ENCODE measurements at regions of chr15 and their contacts with region 1.

Region 1: DNA sequence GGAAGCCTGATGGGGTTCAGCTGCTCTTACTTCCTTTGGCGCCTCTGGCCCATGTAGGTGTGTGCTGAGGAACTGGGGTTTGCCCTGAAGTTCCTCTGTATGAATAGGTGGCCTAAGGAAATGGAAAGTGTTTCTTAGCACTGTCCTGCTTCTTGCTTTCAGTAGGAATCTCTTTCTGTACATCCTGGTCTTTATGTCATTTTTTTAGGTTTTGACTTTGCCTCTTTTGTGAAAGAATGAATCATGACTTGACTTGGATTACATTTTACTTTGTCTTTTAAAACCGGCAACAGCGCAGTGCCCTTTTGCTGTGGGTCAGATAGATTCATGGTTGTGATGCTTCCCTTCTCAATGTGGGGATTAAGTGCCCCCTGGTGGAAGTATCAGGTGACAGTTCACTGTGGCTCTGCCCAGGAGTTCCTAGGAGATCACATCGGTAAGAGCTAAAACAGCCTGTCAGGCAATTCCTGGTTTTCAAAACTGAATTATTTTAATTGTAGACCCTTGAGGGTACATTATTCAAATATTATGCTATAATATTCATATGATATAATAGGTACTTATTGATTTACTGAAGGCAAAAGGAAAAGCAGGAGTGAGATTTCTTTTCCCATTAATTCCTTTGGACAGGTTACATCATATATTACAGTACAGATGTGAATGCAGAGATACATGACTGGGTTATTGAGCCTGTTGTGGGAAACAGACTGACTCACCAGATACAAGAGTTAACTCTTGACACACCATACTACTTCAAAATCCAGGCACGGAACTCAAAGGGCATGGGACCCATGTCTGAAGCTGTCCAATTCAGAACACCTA is 95.4 kb downstream of the HCN4 start:
- DNase-seq: no peak
- ATAC-seq: peak; percentile 88

Region 2: GRCh38 chr15:72796515-72797337 is 476.7 kb before region 1 on chr15:
- intact Hi-C with region 1: loop called (anchors 10 kb)
- DNase-seq: peak; percentile 68
- ATAC-seq: peak; percentile 96

Region 3: GRCh38 chr15:73212424-73212823 is 61.0 kb before region 1 on chr15:
- intact Hi-C with region 1: no loop called
- DNase-seq: no peak
- ATAC-seq: no peak

Measured in Right ventricle myocardium superior (tissue), 1 donor.